GM10248 (cell line): ENCODE measurements at regions of chr1 and their contacts with region 1.

Region 1: GRCh38 chr1:29849038-29849750 is 612.9 kb downstream of the PTPRU start:
- DNase-seq: peak; percentile 46
- CTCF ChIP-seq: peak; percentile 68

Region 2: DNA sequence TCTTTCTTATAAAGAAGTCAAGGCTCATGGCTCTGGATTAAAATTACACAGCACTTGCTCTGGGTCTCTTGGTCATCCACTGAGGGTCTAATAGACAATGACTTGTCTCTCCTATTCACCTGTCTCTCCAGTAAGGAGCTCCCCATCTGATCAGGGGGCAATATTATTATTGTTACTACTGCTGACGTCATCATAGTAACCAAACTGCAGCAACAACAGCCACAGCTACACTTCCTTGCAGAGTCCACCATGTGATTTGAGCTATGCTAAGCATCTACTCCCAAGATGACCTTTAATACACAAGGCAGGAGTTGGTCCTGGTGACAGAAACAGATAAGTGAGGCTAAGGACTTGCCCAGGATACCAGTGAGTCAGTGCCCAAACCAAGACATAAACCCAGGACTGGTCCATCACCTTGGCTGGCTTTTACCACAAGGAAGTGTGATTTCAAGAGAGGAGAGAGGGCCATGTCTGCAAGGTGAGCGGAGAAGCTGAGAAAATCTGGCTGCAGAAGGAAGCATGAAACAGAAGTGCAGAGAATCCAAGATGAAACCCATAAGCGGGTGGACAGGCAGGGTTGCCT is 10.4 kb before region 1 on chr1:
- CTCF ChIA-PET with region 1: interaction called, 12 read pairs
- POLR2A ChIA-PET with region 1: no interaction called
- DNase-seq: no peak
- CTCF ChIP-seq: no peak